Activated T-helper 1 cell treated with anti-CD3 and anti-CD28 coated beads, Interleukin-12 subunit alpha, Interleukin-12 subunit beta, Interleukin-2, Interleukin-4 antibody, amounts not matched to agents 30 ng/mL and 10 ng/mL and 1 ng/mL, durations not matched to agents 14 hours and 24 hours and 36 hours (primary cell): ENCODE measurements at regions of chr4 and their contacts with region 1.

Region 1: DNA sequence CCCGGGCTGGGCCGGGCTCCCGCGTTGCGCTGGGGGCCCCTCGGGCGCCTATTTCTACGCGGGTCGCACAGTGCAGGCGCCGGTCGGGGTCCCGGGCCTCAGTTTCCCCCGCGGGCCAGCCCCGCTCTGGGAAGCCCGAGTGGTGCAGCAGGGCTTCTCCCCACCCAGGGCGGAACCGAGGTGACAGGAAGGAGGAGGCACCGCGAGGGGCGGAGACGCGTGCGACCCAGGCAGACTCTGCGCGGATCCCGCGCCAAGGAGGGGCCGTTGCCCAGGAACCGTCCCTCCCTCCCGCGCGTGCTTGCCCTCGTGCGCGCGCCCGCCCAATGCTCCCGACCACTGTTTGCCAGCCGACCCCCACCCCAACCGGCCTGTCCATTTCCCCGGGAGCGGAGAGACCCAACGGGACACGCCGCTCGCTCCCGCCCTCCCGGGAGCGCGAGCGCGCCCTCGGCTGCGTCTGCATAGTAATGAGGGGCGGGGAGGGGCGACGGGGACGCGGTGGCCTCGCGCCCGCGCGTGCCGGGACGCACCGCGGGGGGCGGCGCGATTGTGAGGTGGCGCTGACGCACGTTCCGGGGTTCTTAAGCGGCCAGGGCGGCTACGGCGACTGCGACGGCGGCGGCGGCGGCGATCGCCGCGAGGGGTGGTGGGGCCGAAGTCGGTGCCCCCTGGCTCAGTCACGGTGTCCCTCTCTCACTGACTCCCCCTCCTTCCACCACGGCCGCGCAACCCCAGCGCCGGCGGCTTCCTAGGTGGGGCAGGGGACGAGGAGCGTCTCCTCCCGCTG is at the start of gene CPEB2:
- DNase-seq: peak; percentile 88
- H3K4me3 Mint-ChIP-seq: peak within 1 kb of the TSS; percentile 92
- H3K27ac Mint-ChIP-seq: peak within 1 kb of the TSS; percentile 93
- H3K4me1 Mint-ChIP-seq: peaks cover 20% of the 10 kb centered on the region
- H3K27me3 Mint-ChIP-seq: no peaks in the 10 kb centered on the region
- total RNA-seq, gene CPEB2: 16.5 and 17.2 TPM in 2 replicates

Region 2: DNA sequence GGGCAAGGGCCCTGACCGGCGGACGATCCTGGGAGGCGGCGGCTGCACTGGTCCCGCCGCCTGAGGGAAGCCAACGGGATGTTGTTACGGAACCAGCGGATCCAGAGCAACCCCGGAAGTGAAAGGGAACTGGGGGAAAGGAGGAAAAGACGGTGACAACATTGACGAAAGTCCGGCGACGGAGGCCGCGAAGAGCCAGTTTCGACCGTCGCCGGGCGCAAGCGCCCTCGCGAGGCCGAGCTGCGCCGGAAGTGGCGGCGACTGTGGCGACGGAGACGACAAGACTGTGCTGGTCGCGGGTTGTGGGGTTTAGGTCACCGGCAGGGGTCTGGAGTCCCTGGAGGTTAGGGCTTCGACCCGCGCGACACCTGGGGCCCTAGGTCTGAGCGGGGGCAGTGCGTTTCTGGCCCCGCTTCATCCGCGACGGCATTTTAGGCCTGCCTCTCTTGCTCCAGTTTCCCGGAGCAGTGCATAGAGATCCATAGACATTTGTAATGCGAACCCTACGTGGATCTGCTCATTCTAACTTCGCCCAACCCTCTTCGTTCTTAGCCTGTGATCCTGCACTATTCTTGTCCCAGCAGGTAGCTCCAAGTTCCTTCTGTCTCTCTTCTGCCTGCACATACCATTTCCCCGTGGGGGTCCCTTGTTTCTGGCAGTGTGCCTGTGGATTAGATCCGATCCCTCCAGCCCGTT is 1374.3 kb before region 1 on chr4 and contains the start of gene BOD1L1:
- intact Hi-C with region 1: loop called (anchors 2 kb)
- DNase-seq: peak; percentile 81
- H3K4me3 Mint-ChIP-seq: peak within 1 kb of the TSS; percentile 99
- H3K27ac Mint-ChIP-seq: peak within 1 kb of the TSS; percentile 98
- H3K4me1 Mint-ChIP-seq: peaks cover 29% of the 10 kb centered on the region
- H3K27me3 Mint-ChIP-seq: peaks cover 4% of the 10 kb centered on the region
- total RNA-seq, gene BOD1L1: 40.1 and 40.4 TPM in 2 replicates

Region 3: GRCh38 chr4:14787894-14788293 is 214.2 kb before region 1 on chr4:
- intact Hi-C with region 1: loop called (anchors 1 kb)
- DNase-seq: no peak
- H3K4me3 Mint-ChIP-seq: no peak overlapping the region
- H3K27ac Mint-ChIP-seq: no peak overlapping the region
- H3K4me1 Mint-ChIP-seq: peaks cover 49% of the 10 kb centered on the region
- H3K27me3 Mint-ChIP-seq: no peaks in the 10 kb centered on the region

Region 4: DNA sequence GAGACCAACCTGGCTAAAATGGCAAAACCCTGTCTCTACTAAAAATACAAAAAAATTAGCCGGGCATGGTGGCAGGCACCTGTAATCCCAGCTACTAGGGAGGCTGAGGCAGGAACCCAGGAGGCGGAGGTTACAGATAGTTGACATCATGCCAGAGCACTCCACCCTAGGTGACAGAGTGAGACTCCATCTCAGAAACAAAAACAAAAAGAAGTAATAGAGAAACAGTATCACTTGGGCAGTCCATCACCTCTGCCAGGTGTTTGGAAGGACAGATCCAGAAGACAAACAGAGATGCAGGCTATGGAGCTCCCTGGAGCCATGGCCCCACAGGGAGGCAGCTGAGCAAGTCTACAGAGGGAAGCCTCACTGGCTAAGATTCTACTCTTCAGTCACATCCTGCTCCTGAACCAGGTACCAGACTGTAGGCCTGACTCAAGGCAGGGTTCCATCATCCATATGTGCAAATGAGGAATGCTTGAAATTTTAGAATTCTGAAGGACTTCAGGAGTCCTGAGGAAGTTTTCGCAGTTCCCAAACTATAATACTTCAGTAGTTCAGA is 81.2 kb before region 1 on chr4:
- intact Hi-C with region 1: loop called (anchors 2 kb)
- DNase-seq: no peak
- H3K4me3 Mint-ChIP-seq: no peak overlapping the region
- H3K27ac Mint-ChIP-seq: no peak overlapping the region
- H3K4me1 Mint-ChIP-seq: no peaks in the 10 kb centered on the region
- H3K27me3 Mint-ChIP-seq: no peaks in the 10 kb centered on the region

Region 5: GRCh38 chr4:14984448-14984847 is 17.6 kb before region 1 on chr4:
- intact Hi-C with region 1: no loop called
- DNase-seq: no peak
- H3K4me3 Mint-ChIP-seq: no peak overlapping the region
- H3K27ac Mint-ChIP-seq: no peak overlapping the region
- H3K4me1 Mint-ChIP-seq: no peaks in the 10 kb centered on the region
- H3K27me3 Mint-ChIP-seq: peaks cover 10% of the 10 kb centered on the region

Region 6: GRCh38 chr4:15117270-15117946 is 115.3 kb after region 1 on chr4:
- intact Hi-C with region 1: loop called (anchors 1 kb)
- DNase-seq: no peak
- H3K4me3 Mint-ChIP-seq: no peak overlapping the region
- H3K27ac Mint-ChIP-seq: peak overlapping the region; percentile 61
- H3K4me1 Mint-ChIP-seq: peaks cover 12% of the 10 kb centered on the region
- H3K27me3 Mint-ChIP-seq: no peaks in the 10 kb centered on the region

Region 7: GRCh38 chr4:15655229-15656037 is 653.4 kb after region 1 on chr4 and contains the start of gene FBXL5:
- intact Hi-C with region 1: loop called (anchors 1 kb)
- DNase-seq: peak; percentile 84
- H3K4me3 Mint-ChIP-seq: peak within 1 kb of the TSS; percentile 99
- H3K27ac Mint-ChIP-seq: peak within 1 kb of the TSS; percentile 96
- H3K4me1 Mint-ChIP-seq: peaks cover 61% of the 10 kb centered on the region
- H3K27me3 Mint-ChIP-seq: no peaks in the 10 kb centered on the region
- total RNA-seq, gene FBXL5: 31.3 and 34.7 TPM in 2 replicates

Region 8: DNA sequence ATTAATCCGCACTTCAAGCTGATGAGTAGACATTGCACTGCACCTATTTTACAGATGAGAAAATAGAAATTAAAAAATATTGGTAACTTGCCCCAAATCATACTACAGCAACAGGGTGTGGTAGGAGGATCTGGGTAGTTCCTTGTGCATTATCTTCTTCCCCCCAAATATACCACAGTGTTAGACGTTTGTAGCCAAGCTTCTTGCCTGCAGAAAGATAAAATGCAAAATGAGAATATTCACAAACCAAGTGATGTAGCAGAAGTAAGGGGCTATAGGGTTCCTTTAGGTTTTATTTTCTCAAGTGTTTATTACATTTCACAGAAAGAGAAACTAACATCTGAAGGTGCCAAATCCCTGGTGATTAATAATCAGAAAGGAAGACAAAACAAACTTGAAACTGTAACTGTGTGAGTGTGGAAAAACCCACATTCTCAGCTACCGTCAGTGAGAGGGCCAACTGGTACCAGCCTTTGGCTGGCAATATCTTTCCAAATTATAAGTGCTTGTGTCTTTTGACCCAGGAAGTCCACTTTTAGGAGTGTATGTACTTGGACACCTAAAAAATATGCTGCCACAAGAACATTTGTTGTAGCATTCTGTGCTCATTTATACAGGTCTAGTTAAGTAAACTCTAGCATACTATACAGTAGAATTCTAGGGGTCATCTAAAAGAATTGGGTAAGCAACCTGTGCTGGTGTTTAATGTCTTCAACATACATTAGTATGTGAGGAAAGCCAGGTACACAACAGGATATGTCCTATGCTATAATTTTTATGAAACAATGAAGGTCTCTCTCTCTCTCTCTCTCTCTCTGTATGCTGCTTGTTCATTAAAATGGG is 769.4 kb after region 1 on chr4:
- intact Hi-C with region 1: loop called (anchors 5 kb)
- DNase-seq: peak; percentile 37
- H3K4me3 Mint-ChIP-seq: peak overlapping the region; percentile 66
- H3K27ac Mint-ChIP-seq: peak overlapping the region; percentile 86
- H3K4me1 Mint-ChIP-seq: peaks cover 85% of the 10 kb centered on the region
- H3K27me3 Mint-ChIP-seq: no peaks in the 10 kb centered on the region